IMR-90 (cell line): ENCODE measurements at regions of chr1 and their contacts with region 1.

Region 1: GRCh38 chr1:64453688-64454087 is 16.2 kb upstream of the CACHD1 start:
- DNase-seq: no peak
- ATAC-seq: no peak
- H3K4me3 ChIP-seq: no peak overlapping the region
- H3K27ac ChIP-seq: no peak overlapping the region
- H3K4me1 ChIP-seq: no peaks in the 10 kb centered on the region
- H3K27me3 ChIP-seq: peaks cover 2% of the 10 kb centered on the region; the same call in 1 of the 2 replicates
- CTCF ChIP-seq: no peak
- POLR2A ChIP-seq: no peak
- RAD21 ChIP-seq: no peak

Region 2: GRCh38 chr1:63316984-63317816 is 1136.5 kb before region 1 on chr1:
- CTCF ChIA-PET with region 1: interaction called, 10 read pairs
- POLR2A ChIA-PET with region 1: no interaction called
- dilution Hi-C with region 1: no loop called
- in situ Hi-C with region 1: no loop called
- intact Hi-C with region 1: no loop called
- DNase-seq: peak; percentile 41
- ATAC-seq: peak; percentile 83
- H3K4me3 ChIP-seq: peak overlapping the region; percentile 21
- H3K27ac ChIP-seq: no peak overlapping the region
- H3K4me1 ChIP-seq: no peaks in the 10 kb centered on the region
- H3K27me3 ChIP-seq: peaks cover 71% of the 10 kb centered on the region
- CTCF ChIP-seq: peak; percentile 55
- POLR2A ChIP-seq: no peak
- RAD21 ChIP-seq: peak; percentile 39